ENCODE measurements at regions of chr19 and their contacts with region 1.

Region 1: GRCh38 chr19:1275260-1275975 is at the start of gene FAM174C:
- DNase-seq: peak; percentile 97
- H3K4me3 ChIP-seq: peak within 1 kb of the TSS; percentile 72 to 76
- H3K27ac ChIP-seq: peak within 1 kb of the TSS; percentile 92 to 99
- H3K4me1 ChIP-seq: peaks cover 28 to 42% of the 10 kb centered on the region in 2 experiments; a peak in 1 of 4 replicates
- H3K27me3 ChIP-seq: no peaks in the 10 kb centered on the region
- CTCF ChIP-seq: no peak
- EP300 ChIP-seq: no peak
- RAD21 ChIP-seq: no peak
- polyA plus RNA-seq, gene FAM174C: 53.5 and 78.0 TPM in 2 replicates

Region 2: DNA sequence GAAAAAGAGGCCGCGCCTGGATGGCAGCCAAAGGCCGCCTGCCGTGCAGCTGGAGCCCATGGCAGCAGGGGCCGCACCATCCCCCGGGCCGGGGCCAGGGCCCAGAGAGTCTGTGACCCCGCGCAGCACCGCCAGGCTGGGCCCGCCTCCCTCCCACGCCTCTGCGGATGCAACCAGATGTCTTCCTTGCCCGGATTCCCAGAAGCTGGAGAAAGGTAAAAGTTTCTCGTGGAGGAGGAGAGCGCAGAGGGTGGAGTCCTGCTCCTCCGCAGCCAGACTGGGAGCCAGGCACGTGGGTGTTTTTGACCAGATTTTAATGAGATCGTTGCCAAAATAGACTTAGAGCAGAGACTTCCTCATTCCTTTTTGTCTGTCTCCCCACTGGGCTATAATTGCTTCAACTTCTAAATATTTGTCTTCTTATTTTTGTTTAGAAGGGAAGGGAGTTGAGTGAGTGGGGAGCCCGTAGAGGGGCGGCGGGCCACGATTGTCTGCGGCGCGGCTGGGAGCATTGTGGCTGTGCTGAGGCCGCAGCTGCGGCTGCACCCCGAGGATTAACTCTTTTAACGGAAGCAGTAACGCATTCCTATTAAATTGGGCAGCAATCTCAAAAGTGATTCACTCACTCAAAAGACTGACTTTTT is 85.5 kb after region 1 on chr19:
- CTCF ChIA-PET with region 1: interaction called, 12 read pairs
- POLR2A ChIA-PET with region 1: no interaction called
- DNase-seq: peak; percentile 97
- H3K4me3 ChIP-seq: peak overlapping the region; percentile 28 to 52
- H3K27ac ChIP-seq: peak overlapping the region; percentile 62 to 92
- H3K4me1 ChIP-seq: peaks cover 25 to 32% of the 10 kb centered on the region in 2 experiments
- H3K27me3 ChIP-seq: no peaks in the 10 kb centered on the region
- CTCF ChIP-seq: no peak
- EP300 ChIP-seq: 0 out of 4 replicates have a peak, but pooled peaks of 1 of the 2 experiments have one; percentile 42
- RAD21 ChIP-seq: peak; percentile 10; the same call in 1 of the 2 replicates

Region 3: GRCh38 chr19:1373534-1374249 is 98.3 kb after region 1 on chr19:
- CTCF ChIA-PET with region 1: interaction called, 23 read pairs
- POLR2A ChIA-PET with region 1: no interaction called
- DNase-seq: no peak
- H3K4me3 ChIP-seq: no peak overlapping the region
- H3K27ac ChIP-seq: no peak overlapping the region
- H3K4me1 ChIP-seq: no peaks in the 10 kb centered on the region
- H3K27me3 ChIP-seq: no peaks in the 10 kb centered on the region
- CTCF ChIP-seq: no peak
- EP300 ChIP-seq: no peak
- RAD21 ChIP-seq: no peak

Region 4: GRCh38 chr19:1383311-1384084 is 108.1 kb after region 1 on chr19 and contains the start of gene NDUFS7:
- CTCF ChIA-PET with region 1: interaction called, 18 read pairs
- POLR2A ChIA-PET with region 1: interaction called, 4 read pairs
- DNase-seq: peak; percentile 90
- H3K4me3 ChIP-seq: peak within 1 kb of the TSS; percentile 83 to 91
- H3K27ac ChIP-seq: peak within 1 kb of the TSS; percentile 62 to 87
- H3K4me1 ChIP-seq: peaks cover 0 to 12% of the 10 kb centered on the region in 2 experiments; a peak in 1 of 4 replicates
- H3K27me3 ChIP-seq: no peaks in the 10 kb centered on the region
- CTCF ChIP-seq: peak; percentile 39; the same call in 1 of the 2 replicates
- EP300 ChIP-seq: peak; percentile 1 to 51; a peak in 2 of 4 replicates
- RAD21 ChIP-seq: no peak
- polyA plus RNA-seq, gene NDUFS7: 52.5 and 66.4 TPM in 2 replicates